RWPE1 (cell line): ENCODE measurements at regions of chr1 and their contacts with region 1.

Region 1: DNA sequence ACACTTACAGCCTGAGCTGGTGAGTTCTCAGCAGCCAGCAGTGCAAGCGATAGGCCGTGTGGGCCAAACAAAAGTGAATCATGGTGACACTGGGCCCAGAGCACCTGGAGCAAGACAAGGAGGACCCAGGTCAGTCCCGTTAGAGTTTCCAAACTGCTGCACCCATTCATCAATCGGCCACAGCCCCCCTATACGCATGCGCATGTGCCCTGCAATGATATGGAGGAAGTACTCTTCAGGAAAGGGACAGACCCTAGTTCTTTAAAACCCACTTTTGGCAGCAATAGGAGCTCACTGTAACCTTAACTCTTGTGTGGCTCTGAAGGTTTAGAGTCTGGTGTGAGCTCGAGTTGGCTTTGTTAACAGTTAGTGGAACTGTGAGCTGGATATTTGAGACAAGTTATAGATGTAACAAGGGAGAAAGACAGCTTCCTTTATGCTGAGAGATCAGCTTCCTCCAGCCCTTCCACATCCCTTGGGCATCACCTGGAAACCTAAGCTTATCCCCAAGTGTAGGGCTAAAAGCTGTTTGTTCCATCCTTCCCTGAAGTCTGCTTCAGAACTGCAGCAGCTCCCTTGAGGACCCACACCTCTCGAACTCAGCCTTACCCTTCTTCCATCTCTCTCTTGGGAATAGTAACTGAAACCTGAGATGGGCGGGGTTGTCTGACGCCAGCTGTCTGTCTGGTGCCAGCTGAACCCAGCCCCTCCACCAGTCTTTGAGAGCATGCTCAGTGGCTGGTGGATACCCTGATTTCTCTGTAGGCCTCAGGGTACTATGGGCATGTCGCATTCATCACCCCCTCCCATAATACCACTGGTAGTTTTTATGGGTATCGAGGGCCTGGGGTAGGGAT is 17.7 kb downstream of the NMNAT1 start:
- DNase-seq: no peak
- H3K27ac ChIP-seq: peak overlapping the region; percentile 32; the same call in 1 of the 2 replicates
- CTCF ChIP-seq: no peak

Region 2: DNA sequence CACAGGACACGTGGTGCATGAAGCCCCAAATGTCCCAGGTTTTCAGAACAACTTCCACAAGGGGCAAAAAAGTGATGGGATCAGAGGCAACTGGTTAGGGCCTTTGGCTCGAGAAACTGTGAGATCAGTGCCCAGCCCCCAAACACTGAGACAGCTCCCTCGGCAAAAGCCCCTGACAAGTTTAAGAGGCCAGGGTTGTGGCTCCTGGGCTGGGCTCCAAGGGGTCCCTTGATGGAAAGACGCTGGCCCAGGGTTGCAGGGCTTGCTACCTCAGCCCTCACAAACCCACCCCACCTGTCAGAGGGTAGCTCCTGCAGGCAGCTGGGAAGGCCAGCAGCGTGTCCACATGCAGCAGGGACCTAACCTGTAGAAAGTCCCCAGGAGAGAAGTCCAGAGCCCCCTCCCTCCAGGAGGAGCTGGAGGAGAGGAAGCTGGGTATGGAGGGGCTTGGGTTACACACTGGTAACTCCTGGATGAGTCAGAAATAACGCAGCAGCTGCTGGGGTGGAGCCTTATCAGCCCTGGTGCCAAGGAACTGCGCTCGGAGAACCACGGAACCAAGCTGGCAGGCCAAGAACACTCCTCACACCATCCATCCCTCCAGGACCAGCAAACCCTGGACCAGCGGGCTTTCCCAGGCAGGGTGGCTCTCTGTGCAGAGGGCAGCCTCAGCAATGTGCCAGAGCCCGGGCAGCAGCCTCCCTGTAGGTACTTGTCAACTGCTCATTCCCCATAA is 88.3 kb before region 1 on chr1:
- CTCF ChIA-PET with region 1: interaction called, 12 read pairs
- POLR2A ChIA-PET with region 1: no interaction called
- DNase-seq: peak; percentile 48
- H3K27ac ChIP-seq: peak overlapping the region; percentile 59
- CTCF ChIP-seq: no peak